Heart left ventricle (tissue), 16 donors: ENCODE measurements at regions of chr5 and their contacts with region 1.

Region 1: DNA sequence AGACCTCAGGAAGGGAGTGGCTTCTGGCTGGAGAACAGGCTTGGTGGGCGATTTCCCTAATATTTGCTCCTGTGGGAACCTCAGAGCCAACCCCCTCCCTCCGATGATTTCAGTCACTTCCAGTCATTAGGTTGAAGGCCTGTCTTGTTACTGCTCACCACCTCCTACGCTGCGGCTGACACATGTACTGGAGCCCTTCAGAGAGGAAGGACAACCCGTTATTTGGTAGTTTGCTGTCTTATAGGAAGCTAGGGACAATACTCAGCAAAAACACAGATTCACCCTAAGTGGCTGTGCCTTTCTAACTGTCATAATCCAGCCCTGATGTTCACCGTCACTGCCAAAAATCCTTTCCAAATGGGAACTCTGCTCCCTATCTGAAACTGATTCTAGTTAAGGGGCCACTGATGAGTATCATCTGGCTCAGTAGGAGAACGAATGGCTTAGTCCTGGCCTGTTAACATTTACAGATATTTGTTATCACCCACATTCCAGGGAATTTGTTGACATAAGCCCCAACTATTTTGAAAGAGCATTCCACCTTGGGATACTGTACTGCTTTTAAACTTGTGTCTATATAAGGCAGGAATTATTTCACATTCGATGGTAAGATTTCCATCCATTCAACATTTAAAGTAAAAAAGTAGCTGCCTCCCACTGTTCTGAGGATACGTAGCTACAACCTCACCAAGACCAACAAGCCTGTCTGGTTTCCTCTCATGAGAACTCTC is 29.3 kb upstream of the ANKH start:
- DNase-seq: peak in 4 of 5 donors; percentile 65 to 85 (median 77)
- ATAC-seq: peak; percentile 89 to 93 (median 92)
- H3K4me3 ChIP-seq: no peak overlapping the region
- H3K27ac ChIP-seq: peak overlapping the region; percentile 14 to 82 (median 66)
- H3K4me1 ChIP-seq: peaks cover 0 to 36% (median 24%) of the 10 kb centered on the region in 12 donors
- H3K27me3 ChIP-seq: no peaks in the 10 kb centered on the region
- CTCF ChIP-seq: no peak
- POLR2A ChIP-seq: no peak

Region 2: DNA sequence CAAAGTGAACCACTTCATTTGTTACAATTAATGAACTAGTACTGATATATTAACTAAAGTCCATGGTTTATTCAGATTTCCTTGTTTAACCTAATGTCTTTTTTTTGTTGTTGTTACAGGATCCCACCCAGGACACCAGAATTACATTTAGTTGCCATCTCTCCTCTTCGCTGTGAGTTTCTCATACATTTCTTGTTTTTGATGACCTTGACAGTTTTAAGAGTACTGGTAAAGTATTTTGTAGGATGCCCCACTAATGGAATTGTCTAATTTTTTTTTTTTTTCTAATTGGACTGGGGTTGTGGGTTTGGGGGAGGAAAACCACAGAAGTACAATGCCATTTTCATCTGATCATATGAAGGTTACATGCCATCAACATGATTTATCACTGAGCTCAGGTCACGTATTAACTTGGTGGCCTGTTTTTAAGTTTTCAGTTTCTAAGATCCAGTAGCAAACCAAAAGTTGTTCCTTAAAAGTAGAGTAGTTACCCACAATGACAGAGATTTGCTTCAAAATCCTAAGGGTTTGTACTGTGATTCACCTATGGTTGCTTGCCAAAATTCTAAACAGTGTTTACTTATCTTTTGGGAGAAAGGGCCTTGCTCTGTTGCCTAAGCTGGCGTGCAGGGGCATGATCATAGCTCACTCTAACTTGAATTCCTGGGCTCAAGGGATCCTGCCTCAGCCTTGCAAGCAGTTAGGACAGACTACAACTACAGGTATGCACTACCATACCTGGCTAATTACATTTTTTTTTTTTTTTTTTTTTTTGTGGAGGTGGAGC is 240.9 kb before region 1 on chr5:
- intact Hi-C with region 1: no loop called
- DNase-seq: no peak
- ATAC-seq: no peak
- H3K4me3 ChIP-seq: no peak overlapping the region
- H3K27ac ChIP-seq: no peak overlapping the region
- H3K4me1 ChIP-seq: peaks cover 0 to 12% (median 8%) of the 10 kb centered on the region in 12 donors
- H3K27me3 ChIP-seq: no peaks in the 10 kb centered on the region
- CTCF ChIP-seq: no peak
- POLR2A ChIP-seq: no peak

Region 3: GRCh38 chr5:14842117-14842516 is 58.8 kb before region 1 on chr5:
- intact Hi-C with region 1: no loop called
- DNase-seq: no peak
- ATAC-seq: peak in 1 of 4 donors; percentile 38
- H3K4me3 ChIP-seq: no peak overlapping the region
- H3K27ac ChIP-seq: no peak overlapping the region
- H3K4me1 ChIP-seq: peaks cover 0 to 17% (median 0%) of the 10 kb centered on the region in 12 donors
- H3K27me3 ChIP-seq: no peaks in the 10 kb centered on the region
- CTCF ChIP-seq: no peak
- POLR2A ChIP-seq: no peak

Region 4: GRCh38 chr5:14937254-14937653 is 36.4 kb after region 1 on chr5:
- intact Hi-C with region 1: loop called in 1 of 10 experiments (anchors 5 kb)
- DNase-seq: peak in 1 of 5 donors; percentile 30
- ATAC-seq: peak in 3 of 4 donors; percentile 64 to 72 (median 69)
- H3K4me3 ChIP-seq: no peak overlapping the region
- H3K27ac ChIP-seq: peak overlapping the region in 7 of 12 donors; percentile 23 to 65 (median 48)
- H3K4me1 ChIP-seq: peaks cover 0 to 28% (median 2%) of the 10 kb centered on the region in 12 donors
- H3K27me3 ChIP-seq: no peaks in the 10 kb centered on the region
- CTCF ChIP-seq: no peak
- POLR2A ChIP-seq: no peak